Dorsolateral prefrontal cortex (tissue), 120 donors: ENCODE measurements at regions of chr11 and their contacts with region 1.

Region 1: DNA sequence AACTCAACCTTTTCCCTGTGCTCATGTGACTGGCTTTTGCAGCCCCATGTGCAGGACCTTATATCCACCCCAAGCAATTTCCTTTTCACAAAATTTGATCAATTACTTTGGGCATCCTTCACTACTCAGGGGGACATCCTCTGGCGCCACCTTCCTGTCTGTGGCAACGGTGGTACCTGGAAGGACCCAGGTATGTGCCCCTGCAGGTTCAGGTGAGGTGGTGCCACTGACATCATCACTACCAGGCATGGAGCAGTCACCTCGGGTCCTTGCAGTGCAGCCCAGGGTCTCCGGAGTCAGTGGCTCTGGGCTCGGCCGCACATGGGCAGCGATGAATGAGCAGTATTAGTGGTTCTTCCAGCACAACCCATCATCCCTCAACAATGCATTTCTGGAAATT is 37.7 kb upstream of the B3GAT1 start:
- DNase-seq: peak in 1 of 10 donors; percentile 29
- H3K4me3 ChIP-seq: no peak overlapping the region
- H3K27ac ChIP-seq: no peak overlapping the region
- H3K27me3 ChIP-seq: no peaks in the 10 kb centered on the region
- CTCF ChIP-seq: no peak

Region 2: DNA sequence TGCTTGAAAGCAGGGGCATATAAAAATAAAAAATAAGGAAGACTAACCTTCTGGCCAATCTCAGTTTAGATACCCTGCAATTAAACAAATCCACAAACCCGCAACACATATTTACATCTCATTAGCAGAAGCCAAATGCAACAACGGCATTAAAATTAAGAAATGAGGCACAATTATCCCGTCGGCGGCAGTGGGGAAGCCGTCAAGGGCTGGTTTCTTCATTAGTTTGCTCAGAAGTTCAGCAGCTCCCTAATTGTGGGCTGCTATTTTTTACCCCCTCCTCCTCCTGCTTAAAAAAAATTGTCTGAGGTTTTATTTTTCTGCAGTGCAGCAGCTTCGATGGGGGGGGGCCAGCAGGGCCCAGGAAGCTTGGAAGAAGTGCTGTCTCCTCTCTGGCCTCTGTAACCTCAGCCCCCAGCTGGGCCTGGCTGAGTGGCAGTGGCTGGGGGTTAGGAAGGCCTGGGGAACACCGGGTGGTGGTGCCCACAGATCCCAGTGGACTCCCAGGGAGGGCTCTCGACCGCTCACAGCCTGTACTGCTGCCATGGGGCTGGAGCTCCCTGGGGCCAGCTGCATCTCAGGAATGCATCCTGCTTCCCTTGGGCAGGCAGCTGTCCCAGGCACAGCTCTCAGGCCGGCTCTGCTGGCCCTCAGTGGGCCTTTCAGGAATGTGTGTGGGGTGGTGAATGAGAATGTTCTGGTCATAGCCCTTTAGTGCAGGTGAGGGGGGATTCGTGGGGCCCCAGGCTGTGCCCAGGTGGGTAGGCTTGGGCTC is 111.0 kb after region 1 on chr11:
- intact Hi-C with region 1: loop called in 1 of 2 experiments (anchors 10 kb)
- DNase-seq: no peak
- H3K4me3 ChIP-seq: no peak overlapping the region
- H3K27ac ChIP-seq: no peak overlapping the region
- H3K27me3 ChIP-seq: no peaks in the 10 kb centered on the region
- CTCF ChIP-seq: no peak

Region 3: GRCh38 chr11:134615041-134615615 is 165.4 kb after region 1 on chr11:
- intact Hi-C with region 1: no loop called
- DNase-seq: no peak
- H3K4me3 ChIP-seq: no peak overlapping the region
- H3K27ac ChIP-seq: no peak overlapping the region
- H3K27me3 ChIP-seq: peaks cover 0 to 5% (median 0%) of the 10 kb centered on the region in 45 donors
- CTCF ChIP-seq: no peak

Region 4: DNA sequence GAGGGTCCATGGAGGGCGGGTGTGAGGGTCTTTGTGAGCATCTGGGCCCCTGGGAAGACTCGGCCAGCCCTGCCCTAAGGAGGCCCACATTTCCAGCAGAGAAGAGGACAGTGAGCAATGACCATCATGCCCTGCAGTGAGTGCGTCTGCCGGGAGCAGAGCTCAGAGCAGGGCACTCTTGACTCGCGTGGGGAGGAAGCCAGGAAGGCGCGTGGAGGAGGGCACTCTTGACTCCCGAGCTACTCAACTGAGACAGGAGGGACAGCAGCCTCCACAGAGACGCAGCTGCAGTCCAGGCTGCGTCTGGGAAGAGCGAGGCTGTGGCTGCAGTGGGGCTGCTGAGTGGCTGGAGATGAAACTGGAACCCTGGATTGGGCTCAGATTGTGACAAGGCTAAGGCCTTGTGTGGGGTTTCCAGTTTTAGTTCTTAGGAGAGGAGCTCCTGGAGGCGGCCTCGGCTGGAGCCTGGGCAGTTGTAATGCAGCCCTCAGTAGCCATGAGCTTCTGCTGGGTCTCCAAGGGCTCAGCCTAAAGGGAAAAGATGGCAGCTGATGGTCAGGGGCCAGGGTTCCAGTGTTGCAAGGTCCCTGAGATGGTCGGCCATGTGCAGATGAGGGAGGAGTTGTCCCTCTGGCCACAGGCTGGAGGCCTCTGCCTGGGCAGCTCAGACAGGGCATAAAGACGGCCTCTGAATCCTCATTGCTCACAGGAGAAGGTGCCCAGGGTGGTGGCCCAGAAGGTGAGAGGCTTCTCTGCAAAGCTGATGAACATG is 227.0 kb after region 1 on chr11:
- intact Hi-C with region 1: no loop called
- DNase-seq: no peak
- H3K4me3 ChIP-seq: no peak overlapping the region
- H3K27ac ChIP-seq: no peak overlapping the region
- H3K27me3 ChIP-seq: peaks cover 0 to 11% (median 0%) of the 10 kb centered on the region in 45 donors
- CTCF ChIP-seq: no peak

Region 5: GRCh38 chr11:134762248-134763029 is 312.7 kb after region 1 on chr11:
- intact Hi-C with region 1: no loop called
- DNase-seq: no peak
- H3K4me3 ChIP-seq: peak overlapping the region in 14 of 59 donors; percentile 11 to 39 (median 20)
- H3K27ac ChIP-seq: no peak overlapping the region
- H3K27me3 ChIP-seq: peaks cover 0 to 11% (median 0%) of the 10 kb centered on the region in 45 donors
- CTCF ChIP-seq: no peak